H1 (cell line): ENCODE measurements at regions of chr11 and their contacts with region 1.

Region 1: GRCh38 chr11:36131721-36132397 is 157.4 kb downstream of the COMMD9 start:
- DNase-seq: peak in 1 of 2 experiments; percentile 66
- H3K4me3 ChIP-seq: no peak overlapping the region
- H3K27ac ChIP-seq: no peak overlapping the region
- H3K4me1 ChIP-seq: peaks cover 1 to 7% (median 5%) of the 10 kb centered on the region in 4 experiments; a peak in 4 of 7 replicates
- H3K27me3 ChIP-seq: no peaks in the 10 kb centered on the region
- CTCF ChIP-seq: peak; percentile 79 to 87 (median 84)
- EP300 ChIP-seq: no peak
- POLR2A ChIP-seq: no peak
- RAD21 ChIP-seq: peak; percentile 89 to 93

Region 2: DNA sequence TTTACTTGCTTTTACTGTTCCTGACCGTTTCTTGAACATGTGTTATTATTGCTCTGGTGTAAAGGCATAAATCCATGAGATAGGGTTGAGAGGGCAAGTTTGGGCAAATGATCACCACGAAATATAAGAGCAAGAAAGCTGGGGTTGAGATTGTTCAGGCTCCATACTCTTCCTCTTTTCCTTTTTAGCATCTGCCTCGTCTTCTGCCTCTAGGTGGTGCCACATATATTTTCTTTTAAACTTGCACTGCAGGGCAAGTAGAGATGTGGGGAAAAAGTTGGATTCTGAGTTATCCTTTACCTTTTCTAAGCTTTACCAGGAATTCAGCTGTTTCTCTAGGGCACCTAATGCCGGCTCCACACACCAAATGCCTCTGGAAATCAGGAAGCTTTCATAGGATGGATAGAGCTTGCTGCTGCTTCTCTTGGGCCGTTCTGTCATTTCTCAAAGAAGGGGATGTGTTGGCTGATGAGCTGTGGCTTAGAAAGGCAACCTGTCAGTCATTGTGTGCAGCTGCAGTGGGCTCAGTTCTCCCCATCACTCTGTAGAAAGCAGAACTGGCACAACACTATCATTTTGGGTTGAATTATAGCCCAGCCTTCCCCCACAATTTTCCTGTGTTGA is 89.8 kb before region 1 on chr11:
- CTCF ChIA-PET with region 1: interaction called, 23 read pairs
- POLR2A ChIA-PET with region 1: no interaction called
- DNase-seq: no peak
- H3K4me3 ChIP-seq: no peak overlapping the region
- H3K27ac ChIP-seq: no peak overlapping the region
- H3K4me1 ChIP-seq: peaks cover 0 to 9% (median 4%) of the 10 kb centered on the region in 4 experiments; a peak in 3 of 7 replicates
- H3K27me3 ChIP-seq: no peaks in the 10 kb centered on the region
- CTCF ChIP-seq: peak in 2 of 3 experiments; percentile 48 to 52; a peak in 2 of 4 replicates
- EP300 ChIP-seq: no peak
- POLR2A ChIP-seq: no peak
- RAD21 ChIP-seq: peak; percentile 50 to 59

Region 3: GRCh38 chr11:36073411-36074203 is 58.3 kb before region 1 on chr11:
- CTCF ChIA-PET with region 1: interaction called, 58 read pairs
- POLR2A ChIA-PET with region 1: interaction called, 3 read pairs
- DNase-seq: no peak
- H3K4me3 ChIP-seq: no peak overlapping the region
- H3K27ac ChIP-seq: peak overlapping the region; percentile 19; the same call in 1 of the 2 replicates
- H3K4me1 ChIP-seq: peaks cover 8 to 32% (median 27%) of the 10 kb centered on the region in 4 experiments
- H3K27me3 ChIP-seq: no peaks in the 10 kb centered on the region
- CTCF ChIP-seq: no peak
- EP300 ChIP-seq: no peak
- POLR2A ChIP-seq: no peak
- RAD21 ChIP-seq: no peak

Region 4: GRCh38 chr11:36109850-36110606 is 21.8 kb before region 1 on chr11:
- CTCF ChIA-PET with region 1: interaction called, 25 read pairs
- POLR2A ChIA-PET with region 1: interaction called, 12 read pairs
- DNase-seq: peak in 1 of 2 experiments; percentile 62
- H3K4me3 ChIP-seq: peak overlapping the region in 2 of 4 experiments; percentile 3 to 38; a peak in 3 of 8 replicates
- H3K27ac ChIP-seq: peak overlapping the region; percentile 97
- H3K4me1 ChIP-seq: peaks cover 16 to 37% (median 30%) of the 10 kb centered on the region in 4 experiments
- H3K27me3 ChIP-seq: no peaks in the 10 kb centered on the region
- CTCF ChIP-seq: no peak
- EP300 ChIP-seq: peak in 1 of 2 experiments; percentile 88; a peak in 1 of 3 replicates
- POLR2A ChIP-seq: peak; percentile 18 to 91
- RAD21 ChIP-seq: no peak

Region 5: DNA sequence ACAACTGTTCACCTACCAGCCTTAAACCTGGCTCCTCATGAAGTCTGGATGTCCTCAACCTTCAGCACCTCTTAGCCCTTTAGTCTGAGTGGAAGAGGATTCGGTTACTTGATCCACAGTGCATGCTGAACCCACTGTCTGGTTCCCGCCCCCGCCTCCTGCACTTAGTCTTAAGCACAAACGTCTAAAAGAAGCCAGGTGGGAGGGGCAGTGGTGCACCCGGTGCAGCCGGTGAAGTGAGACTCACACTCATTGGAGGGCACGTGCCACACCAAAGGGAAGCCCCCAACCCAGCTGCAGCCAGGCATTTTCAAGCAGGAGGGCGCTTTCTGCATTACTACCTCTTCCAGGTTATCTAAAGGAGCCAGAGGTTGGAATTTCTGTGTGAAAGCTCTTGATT is 10.6 kb after region 1 on chr11:
- CTCF ChIA-PET with region 1: interaction called, 25 read pairs
- POLR2A ChIA-PET with region 1: no interaction called
- DNase-seq: no peak
- H3K4me3 ChIP-seq: no peak overlapping the region
- H3K27ac ChIP-seq: no peak overlapping the region
- H3K4me1 ChIP-seq: peaks cover 0 to 9% (median 3%) of the 10 kb centered on the region in 4 experiments; a peak in 3 of 7 replicates
- H3K27me3 ChIP-seq: peaks cover 0 to 2% (median 0%) of the 10 kb centered on the region in 4 experiments; a peak in 1 of 7 replicates
- CTCF ChIP-seq: no peak
- EP300 ChIP-seq: no peak
- POLR2A ChIP-seq: no peak
- RAD21 ChIP-seq: no peak

Region 6: DNA sequence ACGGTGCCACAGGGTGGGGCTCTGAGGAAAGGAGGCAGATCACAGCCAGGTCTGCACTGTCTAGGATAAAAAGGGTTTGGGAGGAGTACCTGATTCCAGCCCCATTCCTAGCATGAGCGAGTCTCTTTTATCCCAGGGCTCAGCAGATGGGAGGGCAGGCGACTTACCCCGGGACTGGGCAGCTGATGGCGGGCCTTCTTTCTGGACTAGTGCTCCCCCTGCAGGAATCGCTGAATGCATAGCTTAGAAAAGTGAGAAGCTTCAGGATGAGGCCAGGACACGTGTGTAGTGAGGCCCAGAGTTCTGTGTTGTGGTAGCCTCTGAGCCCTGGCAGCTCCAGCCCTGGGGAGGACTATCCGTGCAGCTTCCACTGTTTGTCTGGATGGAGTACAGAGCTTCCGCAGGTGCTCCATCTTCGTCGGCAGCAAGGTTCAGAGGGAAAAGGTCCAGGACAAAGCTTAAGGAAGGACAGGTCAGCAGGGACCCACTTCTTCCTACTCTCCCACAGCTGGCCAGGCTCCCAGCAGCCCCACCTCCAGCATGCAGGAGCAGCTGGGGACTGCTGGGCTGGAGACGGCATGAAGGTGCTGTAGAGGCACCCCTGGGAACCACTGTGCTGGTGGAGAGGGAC is 127.0 kb after region 1 on chr11:
- CTCF ChIA-PET with region 1: interaction called, 10 read pairs
- POLR2A ChIA-PET with region 1: no interaction called
- DNase-seq: peak; percentile 36 to 73
- H3K4me3 ChIP-seq: no peak overlapping the region
- H3K27ac ChIP-seq: no peak overlapping the region
- H3K4me1 ChIP-seq: peaks cover 0 to 1% (median 0%) of the 10 kb centered on the region in 4 experiments; a peak in 1 of 7 replicates
- H3K27me3 ChIP-seq: no peaks in the 10 kb centered on the region; a peak in 2 of 7 replicates
- CTCF ChIP-seq: peak; percentile 59 to 87 (median 80)
- EP300 ChIP-seq: no peak
- POLR2A ChIP-seq: no peak
- RAD21 ChIP-seq: peak; percentile 84 to 89